ENCODE measurements at regions of chr20 and their contacts with region 1.

Region 1: GRCh38 chr20:41136680-41137613 is at the start of gene PLCG1:
- DNase-seq: peak; percentile 88
- H3K4me3 ChIP-seq: peak within 1 kb of the TSS; percentile 74
- H3K27ac ChIP-seq: peak within 1 kb of the TSS; percentile 73
- H3K4me1 ChIP-seq: peaks cover 59% of the 10 kb centered on the region
- CTCF ChIP-seq: no peak
- total RNA-seq, gene PLCG1: 92.6 and 103 TPM in 2 replicates

Region 2: DNA sequence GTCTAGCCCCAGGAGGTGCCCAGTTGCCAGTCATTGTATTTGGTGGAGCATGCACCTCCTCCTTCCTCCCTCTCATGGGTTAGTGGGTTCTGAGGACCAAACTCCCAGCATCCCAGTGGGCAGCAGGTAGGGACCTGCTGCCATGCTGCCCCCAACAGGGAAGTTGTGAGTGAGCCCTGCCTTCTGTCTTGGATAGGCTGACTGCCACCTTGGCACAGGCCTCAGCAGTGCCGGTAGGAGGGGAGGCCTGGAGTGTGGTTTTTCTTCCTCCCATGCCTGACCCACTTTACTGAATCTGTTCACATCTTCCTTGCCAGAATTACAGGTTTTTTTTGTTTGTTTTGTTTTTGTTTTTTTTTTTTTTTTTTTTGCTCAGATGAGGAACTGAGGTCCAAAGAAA is 24.9 kb after region 1 on chr20:
- CTCF ChIA-PET with region 1: no interaction called
- POLR2A ChIA-PET with region 1: interaction called, 6 read pairs
- intact Hi-C with region 1: loop called (anchors 2 kb)
- DNase-seq: no peak
- H3K4me3 ChIP-seq: no peak overlapping the region
- H3K27ac ChIP-seq: no peak overlapping the region
- H3K4me1 ChIP-seq: peaks cover 16% of the 10 kb centered on the region
- CTCF ChIP-seq: no peak

Region 3: DNA sequence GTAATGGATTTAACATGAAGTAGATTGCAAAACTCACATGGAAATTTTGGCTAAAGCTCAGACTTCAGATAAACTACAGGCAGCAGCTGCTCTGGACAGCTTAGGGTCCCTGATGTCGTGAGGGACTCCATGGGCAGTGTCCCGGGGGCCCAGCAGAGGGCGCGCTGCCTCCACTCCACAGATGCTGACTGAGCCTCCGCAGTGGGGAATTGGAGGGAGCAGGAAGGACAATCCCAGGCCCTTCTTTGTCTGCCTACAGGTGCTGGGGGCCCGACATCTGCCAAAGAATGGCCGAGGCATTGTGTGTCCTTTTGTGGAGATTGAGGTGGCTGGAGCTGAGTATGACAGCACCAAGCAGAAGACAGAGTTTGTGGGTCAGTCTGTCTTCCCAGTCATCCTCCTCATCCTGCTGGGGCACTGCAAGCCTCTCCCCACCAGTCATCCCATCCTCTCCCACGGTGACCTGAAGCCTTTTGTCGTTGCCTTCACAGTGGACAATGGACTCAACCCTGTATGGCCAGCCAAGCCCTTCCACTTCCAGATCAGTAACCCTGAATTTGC is 36.3 kb after region 1 on chr20:
- CTCF ChIA-PET with region 1: no interaction called
- POLR2A ChIA-PET with region 1: no interaction called
- intact Hi-C with region 1: loop called (anchors 1 kb)
- DNase-seq: peak; percentile 64
- H3K4me3 ChIP-seq: no peak overlapping the region
- H3K27ac ChIP-seq: no peak overlapping the region
- H3K4me1 ChIP-seq: no peaks in the 10 kb centered on the region
- CTCF ChIP-seq: peak; percentile 95

Region 4: DNA sequence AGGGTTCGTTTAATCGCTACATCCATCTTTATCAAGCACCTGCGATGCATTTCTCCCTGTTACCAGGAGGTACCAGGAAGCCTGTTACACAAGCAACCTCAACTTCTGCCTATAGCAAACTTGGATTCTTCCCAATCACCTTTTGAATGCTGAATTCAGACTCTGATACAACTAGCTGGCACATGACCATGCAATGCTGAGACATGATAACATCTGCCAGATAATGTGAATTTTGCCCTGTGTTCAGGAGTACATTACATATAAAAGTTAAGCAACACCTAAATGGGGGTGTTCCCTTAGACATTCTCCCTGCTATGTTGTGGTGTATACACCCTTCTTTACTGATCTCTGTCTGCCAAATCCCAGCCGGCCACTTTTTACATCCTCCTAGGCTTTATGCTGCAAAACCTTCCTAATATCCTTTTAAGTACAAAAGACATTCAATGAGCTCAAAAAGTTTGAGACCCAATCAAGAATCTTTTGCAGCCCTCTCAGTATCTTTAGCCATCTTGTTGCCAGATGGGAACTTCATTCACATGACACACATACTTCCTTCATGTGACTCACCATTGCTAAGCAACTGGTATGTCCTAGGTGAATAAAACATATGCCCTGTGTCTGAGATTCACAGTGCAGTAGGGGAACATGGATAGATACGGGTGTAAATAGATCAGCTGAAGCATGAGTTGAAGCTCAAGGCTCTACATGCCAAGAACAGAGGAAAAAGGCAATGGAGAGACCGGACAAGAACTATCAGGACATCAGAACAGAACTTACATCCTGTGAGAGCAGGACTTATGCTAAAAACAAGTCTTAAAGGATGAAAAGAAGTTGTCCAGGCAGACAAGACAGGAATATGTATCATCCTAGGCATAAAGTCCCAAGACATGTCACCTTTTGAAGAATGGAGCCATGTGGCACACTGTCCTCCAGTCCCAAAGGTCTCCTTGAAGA is 96.3 kb after region 1 on chr20:
- CTCF ChIA-PET with region 1: interaction called, 3 read pairs
- POLR2A ChIA-PET with region 1: no interaction called
- intact Hi-C with region 1: loop called (anchors 2 kb)
- DNase-seq: no peak
- H3K4me3 ChIP-seq: no peak overlapping the region
- H3K27ac ChIP-seq: no peak overlapping the region
- H3K4me1 ChIP-seq: no peaks in the 10 kb centered on the region
- CTCF ChIP-seq: no peak

Region 5: DNA sequence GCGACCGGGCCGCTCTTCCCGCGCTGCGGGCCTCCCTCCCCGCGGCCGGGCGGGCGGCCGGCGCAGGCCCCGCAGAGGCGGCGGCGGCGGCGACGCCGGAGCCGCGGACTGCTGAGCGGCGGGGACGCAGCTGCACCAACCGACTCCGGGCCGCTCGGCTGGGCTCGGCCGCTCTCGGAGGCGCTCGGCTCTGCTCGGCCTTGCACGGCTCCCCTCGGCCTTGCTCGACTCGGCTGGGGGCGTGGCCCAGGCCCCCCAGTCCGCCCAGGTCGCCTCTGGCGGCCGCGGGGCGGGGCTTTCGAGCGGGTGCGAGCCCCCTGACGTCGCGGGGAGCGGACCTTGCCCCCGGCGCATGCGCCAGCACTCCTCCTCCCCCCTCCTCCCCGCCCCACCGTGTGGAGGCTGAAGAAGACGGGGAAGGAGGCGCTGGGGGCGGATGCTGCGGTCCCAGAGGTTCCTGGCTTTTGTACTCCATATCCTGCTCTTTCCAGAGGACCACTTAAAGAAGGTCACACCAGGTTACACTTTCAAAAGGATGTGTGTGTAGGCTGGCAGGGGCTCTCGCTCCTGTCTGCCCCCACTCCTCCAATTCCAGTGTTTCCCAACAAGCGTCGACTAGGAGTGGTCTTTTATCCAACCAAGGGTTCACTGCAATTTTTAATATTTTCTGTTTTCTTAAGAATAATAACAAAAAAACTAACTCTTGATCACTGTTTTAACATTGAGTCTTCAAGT is 180.8 kb after region 1 on chr20 and contains the start of gene ZHX3:
- CTCF ChIA-PET with region 1: no interaction called
- POLR2A ChIA-PET with region 1: no interaction called
- intact Hi-C with region 1: loop called (anchors 1 kb)
- DNase-seq: peak; percentile 99
- H3K4me3 ChIP-seq: peak within 1 kb of the TSS; percentile 91
- H3K27ac ChIP-seq: peak within 1 kb of the TSS; percentile 59
- H3K4me1 ChIP-seq: peaks cover 20% of the 10 kb centered on the region
- CTCF ChIP-seq: no peak
- total RNA-seq, gene ZHX3: 5.8 and 6.4 TPM in 2 replicates

Region 6: GRCh38 chr20:41339507-41340326 is 202.8 kb after region 1 on chr20:
- CTCF ChIA-PET with region 1: interaction called, 3 read pairs
- POLR2A ChIA-PET with region 1: interaction called, 4 read pairs
- intact Hi-C with region 1: loop called (anchors 1 kb)
- DNase-seq: peak; percentile 75
- H3K4me3 ChIP-seq: peak overlapping the region; percentile 30
- H3K27ac ChIP-seq: no peak overlapping the region
- H3K4me1 ChIP-seq: peaks cover 17% of the 10 kb centered on the region
- CTCF ChIP-seq: peak; percentile 97

Region 7: GRCh38 chr20:41693136-41693979 is 556.4 kb after region 1 on chr20:
- CTCF ChIA-PET with region 1: no interaction called
- POLR2A ChIA-PET with region 1: no interaction called
- intact Hi-C with region 1: loop called (anchors 5 kb)
- DNase-seq: peak; percentile 96
- H3K4me3 ChIP-seq: peak overlapping the region; percentile 79
- H3K27ac ChIP-seq: peak overlapping the region; percentile 92
- H3K4me1 ChIP-seq: peaks cover 16% of the 10 kb centered on the region
- CTCF ChIP-seq: peak; percentile 85